ENCODE measurements at regions of chr1 and their contacts with region 1.

Region 1: GRCh38 chr1:184504040-184504954 is 117.5 kb downstream of the C1orf21 start:
- DNase-seq: no peak
- ATAC-seq: peak; percentile 54 to 75 (median 63)
- H3K4me3 ChIP-seq: peak overlapping the region in 7 of 12 donors; percentile 4 to 25 (median 18)
- H3K27ac ChIP-seq: peak overlapping the region; percentile 6 to 70 (median 48)
- H3K4me1 ChIP-seq: peaks cover 11 to 82% (median 52%) of the 10 kb centered on the region in 12 donors
- H3K27me3 ChIP-seq: no peaks in the 10 kb centered on the region
- CTCF ChIP-seq: no peak
- POLR2A ChIP-seq: no peak

Region 2: DNA sequence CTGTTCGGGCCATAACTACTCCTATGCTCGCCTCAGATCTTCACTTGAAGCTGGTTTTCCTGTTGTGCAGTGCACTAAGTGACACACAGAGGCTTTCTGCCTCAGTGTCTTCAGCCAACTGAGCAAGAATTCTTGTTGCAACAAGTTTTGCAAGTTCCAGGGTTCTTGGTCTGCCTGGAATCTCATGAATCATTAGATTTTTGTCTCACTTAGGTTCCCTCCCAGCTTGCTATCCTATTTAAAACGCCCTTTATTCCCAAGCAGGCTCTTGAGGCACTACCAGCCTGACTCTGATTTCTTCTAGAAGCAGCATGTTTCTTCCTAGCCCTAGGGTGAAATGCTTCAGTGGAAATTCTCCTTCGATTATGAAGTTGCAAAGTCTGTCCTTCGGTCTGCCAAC is 41.3 kb after region 1 on chr1:
- intact Hi-C with region 1: loop called in 1 of 10 experiments (anchors 5 kb)
- DNase-seq: no peak
- ATAC-seq: no peak
- H3K4me3 ChIP-seq: no peak overlapping the region
- H3K27ac ChIP-seq: no peak overlapping the region
- H3K4me1 ChIP-seq: peaks cover 0 to 22% (median 5%) of the 10 kb centered on the region in 12 donors
- H3K27me3 ChIP-seq: no peaks in the 10 kb centered on the region
- CTCF ChIP-seq: no peak
- POLR2A ChIP-seq: no peak

Region 3: DNA sequence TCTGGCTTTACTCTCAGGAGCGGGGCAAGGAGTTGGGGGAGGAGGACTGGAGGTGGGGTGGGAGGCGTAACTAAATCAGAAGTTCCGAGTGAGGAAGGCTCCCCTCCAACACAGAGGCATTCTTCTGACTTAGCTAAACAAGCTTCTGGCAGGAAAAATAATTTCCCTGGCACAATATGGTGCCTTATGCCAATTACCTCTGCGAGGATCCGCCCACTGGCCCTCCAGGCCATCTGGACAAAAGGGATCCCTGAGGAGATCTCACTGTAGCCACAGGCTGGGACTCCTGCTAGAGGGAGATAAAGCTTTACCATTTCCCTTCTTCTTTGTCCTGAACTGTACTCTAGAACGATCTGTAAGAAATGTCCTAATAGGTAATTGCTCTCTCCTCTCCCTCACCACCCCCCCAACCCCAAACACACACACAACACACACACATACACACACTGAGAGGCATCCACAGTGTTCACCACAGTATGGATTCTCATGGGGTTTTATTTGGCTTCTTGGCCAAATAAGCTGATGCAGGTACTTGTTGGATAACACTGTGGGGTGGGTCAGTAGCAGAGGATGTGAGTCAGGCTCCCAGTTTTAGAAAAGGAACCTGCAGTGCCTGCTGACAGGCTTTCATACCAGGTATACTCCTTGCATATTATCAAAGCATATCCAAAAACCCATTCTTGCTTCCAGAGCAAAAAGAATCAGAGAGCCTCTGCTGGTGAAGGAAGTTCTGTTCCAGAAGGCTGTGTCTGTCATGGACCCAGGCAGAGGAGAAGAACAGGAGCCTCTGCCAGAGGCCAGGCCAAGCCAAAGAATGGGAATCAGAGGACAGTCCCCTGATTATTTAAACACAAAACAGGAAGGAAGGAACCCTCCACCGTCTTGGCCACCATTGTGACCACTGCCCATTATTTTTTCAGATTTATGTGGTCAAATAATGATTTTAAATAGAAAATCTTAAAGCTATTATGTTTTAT is 51.7 kb after region 1 on chr1:
- intact Hi-C with region 1: loop called in 1 of 10 experiments (anchors 5 kb)
- DNase-seq: peak in 2 of 5 donors; percentile 20 to 38
- ATAC-seq: peak; percentile 52 to 82 (median 65)
- H3K4me3 ChIP-seq: no peak overlapping the region
- H3K27ac ChIP-seq: peak overlapping the region; percentile 26 to 82 (median 64)
- H3K4me1 ChIP-seq: peaks cover 0 to 38% (median 27%) of the 10 kb centered on the region in 12 donors
- H3K27me3 ChIP-seq: no peaks in the 10 kb centered on the region
- CTCF ChIP-seq: no peak
- POLR2A ChIP-seq: no peak

Region 4: GRCh38 chr1:184854496-184855140 is 350.3 kb after region 1 on chr1:
- intact Hi-C with region 1: no loop called
- DNase-seq: no peak
- ATAC-seq: peak; percentile 68 to 91 (median 80)
- H3K4me3 ChIP-seq: no peak overlapping the region
- H3K27ac ChIP-seq: peak overlapping the region in 9 of 12 donors; percentile 32 to 62 (median 40)
- H3K4me1 ChIP-seq: peaks cover 0 to 41% (median 22%) of the 10 kb centered on the region in 12 donors
- H3K27me3 ChIP-seq: no peaks in the 10 kb centered on the region
- CTCF ChIP-seq: no peak
- POLR2A ChIP-seq: no peak

Measured in heart left ventricle (tissue), 16 donors.